Activated CD4-positive, alpha-beta memory T cell treated with anti-CD3 and anti-CD28 coated beads for 36 hours (primary cell): ENCODE measurements at regions of chr17 and their contacts with region 1.

Region 1: GRCh38 chr17:3796110-3796821 is 4.7 kb downstream of the ITGAE start:
- DNase-seq: peak; percentile 88
- H3K4me3 Mint-ChIP-seq: no peak overlapping the region
- H3K27ac Mint-ChIP-seq: no peak overlapping the region
- H3K4me1 Mint-ChIP-seq: peaks cover 34% of the 10 kb centered on the region
- H3K27me3 Mint-ChIP-seq: no peaks in the 10 kb centered on the region

Region 2: DNA sequence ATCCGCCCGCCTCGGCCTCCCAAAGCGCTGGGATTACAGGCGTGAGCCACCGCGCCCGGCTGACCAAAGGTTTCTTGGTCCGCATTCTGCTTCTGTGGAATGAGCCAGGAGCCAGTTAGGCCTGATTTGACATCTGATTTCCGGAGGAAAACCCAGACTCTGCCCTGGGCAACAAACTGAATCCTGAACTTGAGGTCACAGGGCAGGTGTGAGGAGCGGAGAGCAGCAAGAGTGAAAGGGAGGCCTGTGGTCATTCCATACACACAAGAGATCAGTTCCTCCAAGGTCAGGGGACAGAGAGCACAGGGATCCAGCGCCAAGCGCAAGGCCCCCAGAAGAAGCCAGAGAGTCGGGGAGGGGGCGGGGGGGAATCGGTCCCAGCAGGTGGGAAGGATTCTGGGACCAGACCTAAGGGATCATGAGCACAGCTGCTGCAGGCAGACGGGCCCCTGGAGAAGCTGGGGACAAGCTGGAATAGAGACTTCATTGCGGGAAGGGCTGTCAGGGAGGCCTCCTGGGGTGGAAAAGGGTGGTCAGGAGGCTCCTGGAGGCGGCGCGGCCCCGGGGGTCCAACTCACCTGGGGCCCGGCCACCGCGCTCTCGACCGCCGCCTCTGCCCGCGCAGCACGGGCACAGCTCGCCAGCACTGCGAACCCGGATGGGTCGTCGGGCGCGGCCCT is 160.7 kb before region 1 on chr17:
- CTCF ChIA-PET with region 1: no interaction called
- POLR2A ChIA-PET with region 1: no interaction called
- intact Hi-C with region 1: no loop called
- DNase-seq: no peak
- H3K4me3 Mint-ChIP-seq: peak overlapping the region; percentile 94
- H3K27ac Mint-ChIP-seq: no peak overlapping the region
- H3K4me1 Mint-ChIP-seq: peaks cover 34% of the 10 kb centered on the region
- H3K27me3 Mint-ChIP-seq: no peaks in the 10 kb centered on the region

Region 3: DNA sequence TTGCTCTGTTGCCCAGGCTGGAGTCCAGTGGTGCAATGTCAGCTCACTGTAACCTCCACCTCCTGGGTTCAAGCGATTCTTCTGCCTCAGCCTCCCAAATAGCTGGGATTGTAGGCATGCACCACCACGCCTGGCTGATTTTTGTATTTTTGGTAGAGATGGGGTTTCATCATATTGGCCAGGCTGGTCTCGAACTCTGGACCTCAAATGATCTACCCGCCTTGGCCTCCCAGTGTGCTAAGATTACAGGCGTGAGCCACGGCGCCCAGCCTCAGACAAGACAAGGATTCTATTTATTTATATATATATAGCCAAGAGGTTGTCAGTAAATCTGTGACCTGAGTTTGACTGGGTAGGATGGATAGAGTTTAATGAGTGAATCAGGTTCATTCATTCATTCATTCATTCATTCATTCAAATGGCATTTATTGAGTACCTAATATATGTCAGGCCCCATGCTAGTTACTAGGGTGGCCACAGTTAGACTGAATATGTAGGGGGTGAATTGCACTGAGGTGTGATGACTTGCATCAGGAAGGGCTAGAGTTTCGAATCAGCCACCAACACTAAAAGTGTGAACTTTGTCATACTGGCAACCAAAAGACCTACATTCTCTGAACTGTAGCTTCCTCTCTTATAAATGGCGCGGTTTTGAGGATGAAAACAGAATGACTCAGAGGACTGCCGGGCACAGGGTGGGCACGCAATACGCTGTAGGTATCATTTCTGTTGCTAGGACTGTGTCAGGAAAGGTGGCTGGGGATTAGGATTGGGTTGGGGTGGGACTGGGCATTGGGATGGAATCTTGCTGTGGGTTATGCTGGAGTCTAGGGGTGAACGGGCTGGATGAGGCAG is 33.1 kb before region 1 on chr17:
- CTCF ChIA-PET with region 1: interaction called, 4 read pairs
- POLR2A ChIA-PET with region 1: interaction called, 4 read pairs
- intact Hi-C with region 1: loop called (anchors 1 kb)
- DNase-seq: peak; percentile 70
- H3K4me3 Mint-ChIP-seq: peak overlapping the region; percentile 14
- H3K27ac Mint-ChIP-seq: peak overlapping the region; percentile 87
- H3K4me1 Mint-ChIP-seq: peaks cover 43% of the 10 kb centered on the region
- H3K27me3 Mint-ChIP-seq: peaks cover 2% of the 10 kb centered on the region